ENCODE measurements at regions of chr15 and their contacts with region 1.

Region 1: GRCh38 chr15:50438251-50438650 is 14.0 kb downstream of the USP8 start:
- DNase-seq: no peak
- H3K4me3 ChIP-seq: no peak overlapping the region
- H3K27ac ChIP-seq: no peak overlapping the region
- H3K4me1 ChIP-seq: no peaks in the 10 kb centered on the region
- H3K27me3 ChIP-seq: no peaks in the 10 kb centered on the region
- CTCF ChIP-seq: no peak

Region 2: DNA sequence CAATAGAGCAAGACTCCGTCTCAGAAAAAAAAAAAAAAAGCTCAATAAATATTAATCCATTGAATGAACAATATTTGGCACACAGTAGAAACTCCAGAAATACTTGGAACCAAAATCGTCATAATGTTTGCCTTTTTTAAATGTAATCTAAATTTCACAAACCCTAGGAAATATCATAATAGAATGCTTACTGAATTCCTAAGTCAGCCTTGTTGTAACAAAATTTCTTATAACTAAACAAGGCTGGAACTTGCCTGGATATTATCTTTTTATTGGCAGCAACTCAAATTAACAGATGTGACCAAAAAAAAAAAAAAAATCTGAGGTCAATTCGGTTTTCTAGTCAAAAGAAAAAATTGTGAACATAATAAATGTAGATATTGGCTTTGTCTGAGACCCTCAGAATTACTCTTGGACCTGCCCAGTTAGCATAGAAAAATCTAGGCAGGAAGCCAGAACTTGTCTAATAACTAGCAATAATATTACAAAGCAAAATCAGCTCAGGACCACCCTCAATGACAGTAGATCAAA is 116.5 kb before region 1 on chr15:
- CTCF ChIA-PET with region 1: no interaction called
- POLR2A ChIA-PET with region 1: no interaction called
- intact Hi-C with region 1: no loop called
- DNase-seq: no peak
- H3K4me3 ChIP-seq: no peak overlapping the region
- H3K27ac ChIP-seq: no peak overlapping the region
- H3K4me1 ChIP-seq: no peaks in the 10 kb centered on the region
- H3K27me3 ChIP-seq: no peaks in the 10 kb centered on the region
- CTCF ChIP-seq: no peak

Region 3: DNA sequence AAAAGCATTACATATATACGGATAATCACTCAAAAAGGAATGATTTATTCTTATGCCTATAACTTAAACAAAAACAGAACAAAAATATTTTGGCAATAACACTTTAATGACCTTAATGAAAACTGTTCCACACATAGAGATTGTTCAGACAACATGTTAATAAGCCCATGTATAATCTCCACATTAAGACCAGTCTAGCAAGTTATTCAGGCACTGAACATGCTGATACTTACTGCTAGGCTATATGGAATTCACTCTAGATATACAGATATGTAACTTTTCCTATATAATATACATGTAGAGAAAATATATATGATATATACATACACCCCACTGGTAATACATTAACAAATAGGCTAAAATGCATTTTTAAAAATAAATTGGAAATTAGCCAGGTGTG is 152.0 kb after region 1 on chr15:
- CTCF ChIA-PET with region 1: no interaction called
- POLR2A ChIA-PET with region 1: no interaction called
- intact Hi-C with region 1: no loop called
- DNase-seq: no peak
- H3K4me3 ChIP-seq: no peak overlapping the region
- H3K27ac ChIP-seq: no peak overlapping the region
- H3K4me1 ChIP-seq: no peaks in the 10 kb centered on the region
- H3K27me3 ChIP-seq: no peaks in the 10 kb centered on the region
- CTCF ChIP-seq: no peak

Region 4: GRCh38 chr15:50933341-50933740 is 495.1 kb after region 1 on chr15:
- CTCF ChIA-PET with region 1: no interaction called
- POLR2A ChIA-PET with region 1: interaction called, 10 read pairs
- intact Hi-C with region 1: no loop called
- DNase-seq: no peak
- H3K4me3 ChIP-seq: no peak overlapping the region
- H3K27ac ChIP-seq: no peak overlapping the region
- H3K4me1 ChIP-seq: no peaks in the 10 kb centered on the region
- H3K27me3 ChIP-seq: no peaks in the 10 kb centered on the region
- CTCF ChIP-seq: no peak